ENCODE measurements at regions of chr17 and their contacts with region 1.

Region 1: GRCh38 chr17:29617125-29617480 is 5.6 kb downstream of the CORO6 start:
- DNase-seq: peak; percentile 90
- H3K4me3 ChIP-seq: peak overlapping the region in 3 of 4 donors; percentile 14 to 51 (median 34)
- H3K27ac ChIP-seq: peak overlapping the region in 2 of 4 donors; percentile 55 to 66
- H3K4me1 ChIP-seq: peaks cover 45 to 66% (median 57%) of the 10 kb centered on the region in 4 donors
- H3K27me3 ChIP-seq: peaks cover 18% of the 10 kb centered on the region
- CTCF ChIP-seq: peak; percentile 57 to 85 (median 59)
- EP300 ChIP-seq: no peak
- POLR2A ChIP-seq: peak; percentile 38

Region 2: DNA sequence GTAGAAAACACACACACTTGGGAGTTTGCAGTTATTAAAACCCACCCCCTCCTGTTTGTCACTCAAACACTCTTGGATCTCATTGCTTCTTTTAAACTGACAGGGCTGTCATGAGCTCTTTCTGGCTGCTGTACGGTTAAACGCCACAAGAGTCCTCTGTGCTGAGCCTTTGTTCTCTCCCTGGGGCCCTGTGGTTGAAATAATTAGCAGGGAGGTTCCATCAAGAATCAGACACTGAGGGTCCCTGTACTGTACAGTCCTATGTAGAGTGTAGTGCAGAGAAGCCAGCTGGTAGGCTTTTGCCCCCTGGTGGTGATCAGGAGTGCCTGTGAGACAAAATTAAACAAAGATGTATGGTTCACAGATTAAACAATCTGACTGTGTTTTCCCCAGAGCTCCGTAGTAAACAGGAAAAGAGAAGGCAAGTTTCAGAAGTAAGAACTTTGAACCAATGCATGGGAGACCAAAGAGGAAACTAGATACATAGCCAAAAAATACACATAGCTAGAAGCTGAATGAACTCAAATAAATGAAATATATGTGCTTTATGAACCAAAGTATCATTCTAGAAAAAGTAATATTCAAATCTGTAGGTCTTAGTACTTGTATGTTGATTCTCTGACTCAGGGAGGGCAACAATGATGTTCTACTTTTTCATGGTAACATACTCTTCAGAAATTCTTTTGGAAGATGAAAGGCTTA is 314.3 kb after region 1 on chr17:
- in situ Hi-C with region 1: loop called in 1 of 4 experiments (anchors 25 kb)
- intact Hi-C with region 1: no loop called
- DNase-seq: peak; percentile 70
- H3K4me3 ChIP-seq: peak overlapping the region in 2 of 4 donors; percentile 67 to 70
- H3K27ac ChIP-seq: peak overlapping the region; percentile 88 to 99 (median 94)
- H3K4me1 ChIP-seq: peaks cover 5 to 36% (median 27%) of the 10 kb centered on the region in 4 donors
- H3K27me3 ChIP-seq: no peaks in the 10 kb centered on the region
- CTCF ChIP-seq: peak; percentile 87 to 89 (median 88)
- EP300 ChIP-seq: no peak
- POLR2A ChIP-seq: no peak